Activated CD4-positive, alpha-beta memory T cell treated with anti-CD3 and anti-CD28 coated beads, Interleukin-2, amount 10 ng/mL, durations not matched to agents 7 days and 5 days (primary cell): ENCODE measurements at regions of chr7 and their contacts with region 1.

Region 1: DNA sequence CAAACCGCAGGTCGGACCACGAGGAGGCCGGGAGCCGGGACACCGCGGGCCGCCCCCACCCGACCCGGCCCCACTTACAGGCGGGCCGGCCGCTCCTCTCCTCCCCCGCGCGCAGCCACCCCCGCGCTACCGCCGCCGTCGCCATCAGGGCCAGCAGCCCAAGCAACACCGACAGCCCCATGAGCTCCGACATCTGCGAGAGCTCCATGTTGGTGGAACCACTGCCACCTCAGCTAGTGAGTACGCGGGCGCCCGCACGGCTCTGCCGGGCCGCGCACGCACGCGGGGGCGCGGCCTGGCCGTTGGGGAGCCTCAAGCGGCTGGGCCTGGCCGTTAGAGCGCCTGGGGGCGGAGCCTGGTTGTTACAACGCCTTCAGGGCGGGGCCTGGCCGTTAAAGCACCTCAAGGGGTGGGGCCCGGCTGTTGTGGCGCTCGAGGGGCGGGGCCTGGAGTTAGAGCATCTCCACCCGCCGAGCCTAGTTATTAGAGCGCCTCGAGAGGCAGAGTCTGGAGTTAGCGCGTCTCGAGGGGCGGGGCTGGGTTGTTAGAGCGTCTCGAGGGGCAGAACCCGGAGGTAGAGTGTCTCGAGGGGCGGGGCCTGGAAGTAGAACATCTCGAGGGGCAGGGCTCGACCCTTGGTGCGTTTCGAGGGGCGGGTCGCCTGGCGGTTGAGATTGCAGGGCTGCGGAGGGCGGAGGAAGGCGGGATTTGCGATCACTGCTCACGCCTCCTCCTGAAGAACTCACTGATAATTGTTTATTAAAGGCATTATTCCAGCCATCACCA is at the start of gene TBL2:
- DNase-seq: peak; percentile 99
- H3K4me3 Mint-ChIP-seq: peak within 1 kb of the TSS; percentile 85
- H3K27ac Mint-ChIP-seq: peak within 1 kb of the TSS; percentile 96
- H3K4me1 Mint-ChIP-seq: peaks cover 39% of the 10 kb centered on the region
- H3K27me3 Mint-ChIP-seq: no peaks in the 10 kb centered on the region
- total RNA-seq, gene TBL2: 27.1 to 29.0 TPM

Region 2: GRCh38 chr7:73557108-73557396 is 21.5 kb before region 1 on chr7:
- CTCF ChIA-PET with region 1: interaction called, 6 read pairs
- POLR2A ChIA-PET with region 1: interaction called, 31 read pairs
- DNase-seq: peak; percentile 95
- H3K4me3 Mint-ChIP-seq: peak overlapping the region; percentile 90
- H3K27ac Mint-ChIP-seq: peak overlapping the region; percentile 85
- H3K4me1 Mint-ChIP-seq: peaks cover 46% of the 10 kb centered on the region
- H3K27me3 Mint-ChIP-seq: no peaks in the 10 kb centered on the region

Region 3: DNA sequence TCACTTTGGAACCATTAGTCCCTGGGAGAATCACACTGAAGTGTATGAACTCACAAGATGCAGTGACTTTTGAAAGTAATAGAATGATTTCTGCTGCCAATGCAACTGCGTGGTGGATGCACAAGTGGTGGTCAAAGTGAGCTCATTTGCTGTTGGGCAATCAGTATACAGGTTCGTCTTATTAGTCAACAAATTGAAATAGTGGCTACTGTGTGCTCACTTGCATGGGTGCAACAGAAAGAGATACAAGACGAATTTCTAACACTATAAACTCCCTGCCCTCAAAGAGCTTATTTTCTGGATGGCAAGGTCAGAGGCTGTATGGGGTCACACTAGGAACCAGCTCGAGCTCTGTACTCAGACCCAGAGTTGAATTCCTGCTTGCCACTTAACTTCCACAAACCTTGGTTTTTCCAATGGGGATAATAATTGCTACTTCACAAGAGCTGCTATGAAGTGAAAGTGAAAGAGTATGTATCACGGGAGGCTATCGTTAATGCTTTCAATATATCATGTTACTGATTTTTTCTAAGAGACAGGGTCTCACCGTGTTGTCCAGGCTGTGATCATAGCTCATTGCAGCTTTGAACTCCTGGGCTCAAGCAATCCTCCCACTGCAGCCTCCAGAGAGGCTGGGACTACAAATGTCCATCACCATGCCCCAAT is 12.7 kb before region 1 on chr7:
- CTCF ChIA-PET with region 1: interaction called, 3 read pairs
- POLR2A ChIA-PET with region 1: interaction called, 25 read pairs
- DNase-seq: no peak
- H3K4me3 Mint-ChIP-seq: peak overlapping the region; percentile 69
- H3K27ac Mint-ChIP-seq: peak overlapping the region; percentile 64
- H3K4me1 Mint-ChIP-seq: peaks cover 32% of the 10 kb centered on the region
- H3K27me3 Mint-ChIP-seq: no peaks in the 10 kb centered on the region